Activated B cell treated with CpG ODN at 0.5 μM for 24 hours (primary cell): ENCODE measurements at regions of chr17 and their contacts with region 1.

Region 1: GRCh38 chr17:56833809-56834379 is at the starts of genes C17orf67 and DGKE:
- DNase-seq: peak; percentile 99
- ATAC-seq: peak; percentile 92
- H3K4me3 Mint-ChIP-seq: peak within 1 kb of the TSS; percentile 93
- H3K27ac Mint-ChIP-seq: peak within 1 kb of the TSS; percentile 88
- H3K4me1 Mint-ChIP-seq: peaks cover 42% of the 10 kb centered on the region
- H3K27me3 Mint-ChIP-seq: no peaks in the 10 kb centered on the region
- CTCF ChIP-seq: no peak
- total RNA-seq, gene C17orf67: 3.3 and 4.0 TPM in 2 replicates
- total RNA-seq, gene DGKE: 15.4 and 20.3 TPM in 2 replicates

Region 2: DNA sequence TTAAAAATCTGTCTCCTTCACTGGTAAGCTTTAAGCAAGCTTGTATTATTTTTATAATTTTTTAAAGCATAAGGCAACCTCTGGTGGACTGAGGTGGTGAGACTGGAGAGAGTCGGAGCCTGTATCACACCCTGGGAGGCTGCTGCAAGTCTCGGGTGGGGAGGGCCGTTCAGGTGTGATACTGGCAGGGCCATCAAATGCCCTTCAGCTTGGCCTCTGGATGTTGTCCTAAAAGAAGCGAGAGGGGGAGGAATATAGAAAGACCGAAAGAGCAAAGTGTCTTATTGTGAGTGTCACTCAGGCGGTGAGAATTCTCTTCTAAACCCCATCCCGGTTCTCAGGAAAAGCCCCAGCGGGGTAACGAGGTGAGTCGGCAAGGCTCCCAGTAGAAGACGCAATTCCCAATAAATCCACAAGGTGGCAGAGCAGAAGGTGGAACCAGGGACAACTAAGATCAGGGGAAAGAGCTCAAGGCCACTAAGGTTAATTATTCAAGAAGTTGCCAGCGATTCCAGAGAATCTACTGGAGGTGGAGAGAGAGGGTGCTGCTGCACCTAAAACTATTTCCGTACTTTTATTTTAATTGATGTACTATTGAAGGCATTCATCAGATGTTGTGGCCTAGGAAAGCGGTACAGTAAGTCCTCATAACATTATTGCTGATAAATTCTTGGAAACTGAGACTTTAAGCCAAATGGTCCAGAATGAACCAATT is 14.3 kb before region 1 on chr17:
- CTCF ChIA-PET with region 1: interaction called, 14 read pairs
- POLR2A ChIA-PET with region 1: interaction called, 5 read pairs
- intact Hi-C with region 1: loop called (anchors 1 kb)
- DNase-seq: peak; percentile 38
- ATAC-seq: peak; percentile 86
- H3K4me3 Mint-ChIP-seq: no peak overlapping the region
- H3K27ac Mint-ChIP-seq: no peak overlapping the region
- H3K4me1 Mint-ChIP-seq: peaks cover 4% of the 10 kb centered on the region
- H3K27me3 Mint-ChIP-seq: no peaks in the 10 kb centered on the region
- CTCF ChIP-seq: no peak

Region 3: GRCh38 chr17:56913864-56914640 is 80.2 kb after region 1 on chr17 and contains the start of gene TRIM25:
- CTCF ChIA-PET with region 1: no interaction called
- POLR2A ChIA-PET with region 1: interaction called, 12 read pairs
- intact Hi-C with region 1: loop called (anchors 1 kb)
- DNase-seq: peak; percentile 71
- ATAC-seq: peak; percentile 87
- H3K4me3 Mint-ChIP-seq: peak within 1 kb of the TSS; percentile 94
- H3K27ac Mint-ChIP-seq: peak within 1 kb of the TSS; percentile 90
- H3K4me1 Mint-ChIP-seq: peaks cover 54% of the 10 kb centered on the region
- H3K27me3 Mint-ChIP-seq: no peaks in the 10 kb centered on the region
- CTCF ChIP-seq: no peak
- total RNA-seq, gene TRIM25: 63.5 and 71.4 TPM in 2 replicates

Region 4: GRCh38 chr17:56939901-56940343 is 106.0 kb after region 1 on chr17:
- CTCF ChIA-PET with region 1: no interaction called
- POLR2A ChIA-PET with region 1: no interaction called
- intact Hi-C with region 1: no loop called
- DNase-seq: no peak
- ATAC-seq: peak; percentile 93
- H3K4me3 Mint-ChIP-seq: no peak overlapping the region
- H3K27ac Mint-ChIP-seq: no peak overlapping the region
- H3K4me1 Mint-ChIP-seq: peaks cover 3% of the 10 kb centered on the region
- H3K27me3 Mint-ChIP-seq: no peaks in the 10 kb centered on the region
- CTCF ChIP-seq: peak; percentile 84

Region 5: DNA sequence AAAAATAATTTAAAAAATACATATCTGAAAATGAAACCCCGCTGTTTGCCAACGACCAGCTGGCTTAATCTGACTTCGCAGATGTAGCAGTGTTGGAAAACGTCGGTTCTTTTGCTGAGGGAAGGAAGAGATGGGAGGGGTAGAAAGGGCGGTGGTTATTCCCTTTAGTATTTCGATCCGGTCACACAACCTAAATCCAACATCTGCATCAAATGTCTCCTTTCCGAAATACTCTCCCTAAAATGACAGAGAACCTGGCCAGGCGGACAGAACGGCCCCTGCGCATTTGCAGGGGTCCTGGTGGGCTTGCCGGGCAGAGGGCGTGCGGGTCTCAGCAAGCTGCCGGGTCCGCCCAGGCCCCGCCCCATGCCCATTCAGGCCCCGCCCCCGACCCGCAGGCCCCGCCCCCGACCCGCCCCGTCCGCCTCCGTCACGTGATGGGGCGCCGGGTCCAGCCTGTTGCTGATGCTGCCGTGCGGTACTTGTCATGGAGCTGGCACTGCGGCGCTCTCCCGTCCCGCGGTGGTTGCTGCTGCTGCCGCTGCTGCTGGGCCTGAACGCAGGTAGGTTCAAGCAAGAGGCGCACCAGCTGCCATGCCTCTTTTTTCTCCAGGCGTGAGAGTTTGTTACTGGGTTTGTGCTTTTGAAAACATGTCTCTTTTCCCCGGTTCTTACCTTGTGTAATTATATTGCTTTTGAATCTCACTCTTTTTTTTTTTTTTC is 143.9 kb after region 1 on chr17 and contains the start of gene SCPEP1:
- CTCF ChIA-PET with region 1: no interaction called
- POLR2A ChIA-PET with region 1: interaction called, 4 read pairs
- intact Hi-C with region 1: loop called (anchors 1 kb)
- DNase-seq: peak; percentile 67
- ATAC-seq: peak; percentile 97
- H3K4me3 Mint-ChIP-seq: peak within 1 kb of the TSS; percentile 91
- H3K27ac Mint-ChIP-seq: peak within 1 kb of the TSS; percentile 89
- H3K4me1 Mint-ChIP-seq: peaks cover 26% of the 10 kb centered on the region
- H3K27me3 Mint-ChIP-seq: no peaks in the 10 kb centered on the region
- CTCF ChIP-seq: no peak
- total RNA-seq, gene SCPEP1: 32.0 and 35.2 TPM in 2 replicates

Region 6: DNA sequence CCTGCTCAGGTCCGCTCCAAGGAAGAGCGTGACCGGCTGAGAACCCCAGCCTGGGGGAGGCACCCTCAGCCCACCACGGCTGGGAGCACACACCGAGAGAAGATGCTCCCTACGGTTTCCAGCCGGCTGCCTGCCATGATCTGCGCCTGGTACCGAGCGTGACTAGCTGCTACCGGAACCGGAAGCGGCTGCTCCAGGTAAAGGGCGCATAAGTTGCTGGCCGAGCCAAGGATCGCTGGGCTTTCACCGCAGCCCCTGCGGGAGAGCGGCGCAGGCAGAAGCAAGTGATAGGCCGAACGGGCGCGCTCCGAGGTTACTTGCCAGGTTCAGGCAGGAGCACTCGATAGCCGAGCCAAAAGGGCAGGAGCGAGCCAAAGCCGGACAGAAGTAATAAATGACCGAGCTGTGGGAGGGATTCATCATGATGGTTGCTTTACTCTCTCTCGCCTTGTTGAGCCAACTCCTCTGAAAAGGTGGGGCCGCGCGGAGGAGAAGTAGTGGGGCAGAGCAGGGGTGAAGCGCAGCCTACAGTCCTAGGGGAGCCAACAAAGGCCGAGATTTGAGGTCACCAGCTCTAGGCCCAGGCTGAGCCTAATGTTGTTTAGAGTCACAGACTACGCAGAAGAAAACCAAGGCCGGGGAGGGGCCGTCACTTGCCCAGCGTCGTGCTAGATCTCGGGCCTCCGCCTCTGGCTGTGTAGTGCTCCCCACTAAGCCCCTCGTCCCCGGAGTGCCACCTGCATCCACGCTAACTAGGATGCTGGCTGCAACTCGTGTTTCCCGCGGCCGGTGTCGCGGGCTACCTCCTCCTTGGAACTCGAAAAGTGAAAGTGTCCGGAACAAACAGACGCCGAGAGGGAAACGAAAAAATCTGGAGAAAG is 1016.2 kb after region 1 on chr17 and contains the start of gene MRPS23:
- CTCF ChIA-PET with region 1: no interaction called
- POLR2A ChIA-PET with region 1: no interaction called
- intact Hi-C with region 1: loop called (anchors 10 kb)
- DNase-seq: peak; percentile 87
- ATAC-seq: peak; percentile 95
- H3K4me3 Mint-ChIP-seq: peak within 1 kb of the TSS; percentile 93
- H3K27ac Mint-ChIP-seq: peak within 1 kb of the TSS; percentile 96
- H3K4me1 Mint-ChIP-seq: peaks cover 38% of the 10 kb centered on the region
- H3K27me3 Mint-ChIP-seq: no peaks in the 10 kb centered on the region
- CTCF ChIP-seq: no peak
- total RNA-seq, gene MRPS23: 37.9 and 47.4 TPM in 2 replicates